Heart left ventricle (tissue), 16 donors: ENCODE measurements at regions of chr11 and their contacts with region 1.

Region 1: GRCh38 chr11:81174646-81175330 is 1558.9 kb downstream of the FAM181B start:
- DNase-seq: no peak
- ATAC-seq: no peak
- H3K4me3 ChIP-seq: no peak overlapping the region
- H3K27ac ChIP-seq: no peak overlapping the region
- H3K4me1 ChIP-seq: no peaks in the 10 kb centered on the region
- H3K27me3 ChIP-seq: no peaks in the 10 kb centered on the region
- CTCF ChIP-seq: no peak
- POLR2A ChIP-seq: no peak

Region 2: GRCh38 chr11:81135570-81135969 is 39.2 kb before region 1 on chr11:
- intact Hi-C with region 1: loop called in 1 of 10 experiments (anchors 5 kb)
- DNase-seq: no peak
- ATAC-seq: no peak
- H3K4me3 ChIP-seq: no peak overlapping the region
- H3K27ac ChIP-seq: no peak overlapping the region
- H3K4me1 ChIP-seq: no peaks in the 10 kb centered on the region
- H3K27me3 ChIP-seq: no peaks in the 10 kb centered on the region
- CTCF ChIP-seq: no peak
- POLR2A ChIP-seq: no peak